HCT116 (cell line): ENCODE measurements at regions of chr12 and their contacts with region 1.

Region 1: GRCh38 chr12:14167005-14167628 is 185.7 kb upstream of the GRIN2B start:
- DNase-seq: peak; percentile 61
- ATAC-seq: peak; percentile 80
- H3K4me3 ChIP-seq: no peak overlapping the region
- H3K27ac ChIP-seq: no peak overlapping the region
- H3K4me1 ChIP-seq: no peaks in the 10 kb centered on the region
- H3K27me3 ChIP-seq: no peaks in the 10 kb centered on the region
- CTCF ChIP-seq: peak; percentile 90 to 98 (median 91)
- POLR2A ChIP-seq: no peak
- RAD21 ChIP-seq: peak; percentile 97

Region 2: GRCh38 chr12:13278249-13278787 is 888.8 kb before region 1 on chr12:
- CTCF ChIA-PET with region 1: interaction called, 9 read pairs
- POLR2A ChIA-PET with region 1: no interaction called
- RAD21 ChIA-PET with region 1: no interaction called
- intact Hi-C with region 1: loop called (anchors 1 kb)
- DNase-seq: peak; percentile 34
- ATAC-seq: peak; percentile 99
- H3K4me3 ChIP-seq: no peak overlapping the region
- H3K27ac ChIP-seq: peak overlapping the region; percentile 40; the same call in 1 of the 2 replicates
- H3K4me1 ChIP-seq: peaks cover 3 to 13% of the 10 kb centered on the region in 2 experiments; a peak in 3 of 4 replicates
- H3K27me3 ChIP-seq: no peaks in the 10 kb centered on the region
- CTCF ChIP-seq: peak; percentile 83 to 98 (median 96)
- POLR2A ChIP-seq: no peak
- RAD21 ChIP-seq: peak; percentile 94

Region 3: GRCh38 chr12:13534645-13535398 is 632.3 kb before region 1 on chr12:
- CTCF ChIA-PET with region 1: interaction called, 8 read pairs
- POLR2A ChIA-PET with region 1: no interaction called
- RAD21 ChIA-PET with region 1: no interaction called
- intact Hi-C with region 1: loop called (anchors 2 kb)
- DNase-seq: peak; percentile 51
- ATAC-seq: peak; percentile 87
- H3K4me3 ChIP-seq: no peak overlapping the region
- H3K27ac ChIP-seq: peak overlapping the region; percentile 7; the same call in 1 of the 2 replicates
- H3K4me1 ChIP-seq: peaks cover 34 to 36% of the 10 kb centered on the region in 2 experiments
- H3K27me3 ChIP-seq: no peaks in the 10 kb centered on the region
- CTCF ChIP-seq: peak; percentile 61 to 100 (median 99); a peak in 5 of 6 replicates
- POLR2A ChIP-seq: no peak
- RAD21 ChIP-seq: peak; percentile 69

Region 4: GRCh38 chr12:13816394-13816793 is 350.7 kb before region 1 on chr12:
- CTCF ChIA-PET with region 1: no interaction called
- POLR2A ChIA-PET with region 1: no interaction called
- RAD21 ChIA-PET with region 1: no interaction called
- intact Hi-C with region 1: no loop called
- DNase-seq: no peak
- ATAC-seq: no peak
- H3K4me3 ChIP-seq: no peak overlapping the region
- H3K27ac ChIP-seq: no peak overlapping the region
- H3K4me1 ChIP-seq: no peaks in the 10 kb centered on the region
- H3K27me3 ChIP-seq: no peaks in the 10 kb centered on the region
- CTCF ChIP-seq: no peak
- POLR2A ChIP-seq: no peak
- RAD21 ChIP-seq: no peak

Region 5: GRCh38 chr12:13864081-13864673 is 302.9 kb before region 1 on chr12:
- CTCF ChIA-PET with region 1: interaction called, 11 read pairs
- POLR2A ChIA-PET with region 1: no interaction called
- RAD21 ChIA-PET with region 1: no interaction called
- intact Hi-C with region 1: loop called (anchors 2 kb)
- DNase-seq: peak; percentile 54
- ATAC-seq: peak; percentile 98
- H3K4me3 ChIP-seq: no peak overlapping the region
- H3K27ac ChIP-seq: no peak overlapping the region
- H3K4me1 ChIP-seq: no peaks in the 10 kb centered on the region
- H3K27me3 ChIP-seq: no peaks in the 10 kb centered on the region
- CTCF ChIP-seq: peak; percentile 68 to 94 (median 93); a peak in 5 of 6 replicates
- POLR2A ChIP-seq: no peak
- RAD21 ChIP-seq: peak; percentile 66

Region 6: GRCh38 chr12:13913371-13913770 is 253.7 kb before region 1 on chr12:
- CTCF ChIA-PET with region 1: no interaction called
- POLR2A ChIA-PET with region 1: no interaction called
- RAD21 ChIA-PET with region 1: no interaction called
- intact Hi-C with region 1: no loop called
- DNase-seq: no peak
- ATAC-seq: peak; percentile 44
- H3K4me3 ChIP-seq: no peak overlapping the region
- H3K27ac ChIP-seq: no peak overlapping the region
- H3K4me1 ChIP-seq: no peaks in the 10 kb centered on the region
- H3K27me3 ChIP-seq: no peaks in the 10 kb centered on the region
- CTCF ChIP-seq: peak; percentile 7 to 17 (median 10); a peak in 1 of 6 replicates
- POLR2A ChIP-seq: no peak
- RAD21 ChIP-seq: 0 out of 2 replicates have a peak, but pooled peaks have one; percentile 24

Region 7: GRCh38 chr12:13962699-13963098 is 204.4 kb before region 1 on chr12:
- CTCF ChIA-PET with region 1: no interaction called
- POLR2A ChIA-PET with region 1: no interaction called
- RAD21 ChIA-PET with region 1: no interaction called
- intact Hi-C with region 1: loop called (anchors 10 kb)
- DNase-seq: peak; percentile 10
- ATAC-seq: peak; percentile 86
- H3K4me3 ChIP-seq: no peak overlapping the region
- H3K27ac ChIP-seq: no peak overlapping the region
- H3K4me1 ChIP-seq: no peaks in the 10 kb centered on the region
- H3K27me3 ChIP-seq: no peaks in the 10 kb centered on the region
- CTCF ChIP-seq: peak; percentile 26 to 76 (median 57); a peak in 4 of 6 replicates
- POLR2A ChIP-seq: no peak
- RAD21 ChIP-seq: peak; percentile 49